Thyroid gland (tissue), 4 donors: ENCODE measurements at regions of chrX and their contacts with region 1.

Region 1: DNA sequence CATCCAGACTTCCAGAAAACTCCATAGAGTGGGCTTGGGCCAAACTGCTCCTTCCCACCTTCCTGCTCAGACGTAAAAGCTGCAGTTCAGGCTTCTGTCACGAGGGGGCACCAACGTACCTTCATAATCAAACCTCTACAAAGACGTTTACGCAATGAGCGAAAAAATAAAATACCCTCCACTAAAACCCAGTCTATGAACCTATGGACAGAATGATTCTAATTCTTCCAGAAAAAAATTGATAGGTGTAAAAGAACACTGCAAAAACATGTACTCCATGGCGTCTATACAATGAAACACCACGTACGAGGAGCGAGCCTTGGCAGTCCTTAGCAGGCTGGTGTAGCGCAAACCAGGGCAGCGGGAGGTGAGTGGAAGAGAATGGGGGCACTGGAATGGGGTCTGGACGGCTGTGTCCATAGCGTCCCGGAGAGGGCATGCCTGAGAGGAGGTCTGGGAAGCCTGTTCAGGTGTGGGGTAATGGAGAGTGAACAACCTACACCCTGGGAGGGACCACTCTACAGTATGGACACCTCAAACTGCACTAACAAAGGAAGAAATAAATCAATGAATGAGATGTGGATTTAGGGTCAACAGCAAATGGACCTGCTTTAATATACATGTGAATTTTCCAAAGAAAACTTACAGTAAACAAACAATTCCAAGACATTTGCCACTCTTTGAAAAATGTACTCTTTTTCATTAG is 14.4 kb upstream of the RAB40A start:
- DNase-seq: peak; percentile 69 to 75
- H3K4me3 ChIP-seq: no peak overlapping the region
- H3K27ac ChIP-seq: no peak overlapping the region
- H3K4me1 ChIP-seq: no peaks in the 10 kb centered on the region
- H3K27me3 ChIP-seq: no peaks in the 10 kb centered on the region
- CTCF ChIP-seq: peak in 5 of 6 experiments; percentile 57 to 77 (median 71)
- POLR2A ChIP-seq: no peak

Region 2: GRCh38 chrX:103656632-103657031 is 123.0 kb after region 1 on chrX:
- intact Hi-C with region 1: no loop called
- DNase-seq: no peak
- H3K4me3 ChIP-seq: no peak overlapping the region
- H3K27ac ChIP-seq: no peak overlapping the region
- H3K4me1 ChIP-seq: no peaks in the 10 kb centered on the region
- H3K27me3 ChIP-seq: no peaks in the 10 kb centered on the region
- CTCF ChIP-seq: no peak
- POLR2A ChIP-seq: no peak

Region 3: DNA sequence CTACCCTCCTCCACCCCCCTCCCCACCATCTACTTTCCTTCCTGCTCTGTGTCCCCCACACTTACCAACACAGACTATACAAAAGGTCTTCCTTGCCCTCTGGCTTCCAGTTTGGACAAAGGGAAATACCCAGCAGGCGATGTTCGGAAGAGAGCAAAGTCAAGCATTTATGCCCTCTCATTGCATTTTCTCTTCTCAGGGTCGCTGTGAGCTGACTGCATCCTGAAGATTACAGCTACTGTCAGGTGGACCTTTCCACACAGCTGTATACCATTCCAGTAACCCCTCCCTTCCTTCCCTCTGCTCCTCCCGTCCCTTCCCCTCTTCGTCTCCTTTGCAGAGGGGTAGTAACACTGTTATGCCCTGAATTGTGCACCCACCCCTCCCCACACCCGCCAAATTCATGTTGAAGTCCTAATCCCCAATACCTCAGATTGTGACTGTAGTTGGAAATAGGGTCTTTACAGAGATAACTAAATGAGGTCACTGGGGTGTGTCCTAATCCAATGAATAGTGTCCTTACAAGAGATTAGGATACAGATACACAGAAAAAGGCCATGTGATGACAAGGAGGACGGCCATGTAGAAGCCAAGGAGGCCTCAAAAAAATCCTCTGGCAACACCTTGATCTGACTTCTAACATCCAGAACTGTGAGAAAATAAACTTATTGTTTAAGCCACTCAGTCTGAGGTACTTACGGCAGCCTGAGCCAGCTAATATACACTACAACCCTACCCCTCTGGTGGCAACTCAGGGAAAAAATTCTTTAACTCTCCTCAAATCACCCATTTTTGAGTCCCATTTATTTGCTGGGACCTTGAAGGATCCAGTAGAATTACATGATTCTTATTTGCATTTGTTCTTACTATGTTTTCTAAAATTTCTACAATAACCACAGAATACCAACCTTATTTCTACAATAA is 141.1 kb after region 1 on chrX:
- intact Hi-C with region 1: loop called (anchors 10 kb)
- DNase-seq: no peak
- H3K4me3 ChIP-seq: no peak overlapping the region
- H3K27ac ChIP-seq: no peak overlapping the region
- H3K4me1 ChIP-seq: no peaks in the 10 kb centered on the region
- H3K27me3 ChIP-seq: no peaks in the 10 kb centered on the region
- CTCF ChIP-seq: no peak
- POLR2A ChIP-seq: no peak

Region 4: GRCh38 chrX:103817502-103817901 is 283.8 kb after region 1 on chrX:
- intact Hi-C with region 1: loop called (anchors 5 kb)
- DNase-seq: no peak
- H3K4me3 ChIP-seq: no peak overlapping the region
- H3K27ac ChIP-seq: no peak overlapping the region
- H3K4me1 ChIP-seq: no peaks in the 10 kb centered on the region
- H3K27me3 ChIP-seq: no peaks in the 10 kb centered on the region
- CTCF ChIP-seq: peak; percentile 34 to 85 (median 53)
- POLR2A ChIP-seq: no peak